CD8-positive, alpha-beta T cell (primary cell): ENCODE measurements at regions of chr6 and their contacts with region 1.

Region 1: GRCh38 chr6:30541515-30542403 is 14.5 kb downstream of the GNL1 start:
- DNase-seq: peak; percentile 59 to 92 (median 82)
- ATAC-seq: peak; percentile 69
- H3K4me3 ChIP-seq: peak overlapping the region; percentile 42 to 66
- H3K4me3 Mint-ChIP-seq: peak overlapping the region; percentile 88
- H3K27ac ChIP-seq: peak overlapping the region; percentile 50 to 72
- H3K27ac Mint-ChIP-seq: peak overlapping the region; percentile 97
- H3K4me1 ChIP-seq: peaks cover 34% of the 10 kb centered on the region
- H3K4me1 Mint-ChIP-seq: peaks cover 34% of the 10 kb centered on the region
- H3K27me3 ChIP-seq: no peaks in the 10 kb centered on the region
- H3K27me3 Mint-ChIP-seq: no peaks in the 10 kb centered on the region
- CTCF ChIP-seq: peak; percentile 99

Region 2: GRCh38 chr6:29092957-29093356 is 1448.8 kb before region 1 on chr6:
- CTCF ChIA-PET with region 1: no interaction called
- POLR2A ChIA-PET with region 1: no interaction called
- intact Hi-C with region 1: no loop called
- DNase-seq: no peak
- ATAC-seq: no peak
- H3K4me3 ChIP-seq: no peak overlapping the region
- H3K4me3 Mint-ChIP-seq: no peak overlapping the region
- H3K27ac ChIP-seq: no peak overlapping the region
- H3K27ac Mint-ChIP-seq: no peak overlapping the region
- H3K4me1 ChIP-seq: no peaks in the 10 kb centered on the region
- H3K4me1 Mint-ChIP-seq: no peaks in the 10 kb centered on the region
- H3K27me3 ChIP-seq: no peaks in the 10 kb centered on the region
- H3K27me3 Mint-ChIP-seq: peaks cover 25% of the 10 kb centered on the region
- CTCF ChIP-seq: no peak

Region 3: GRCh38 chr6:30344868-30345671 is 196.7 kb before region 1 on chr6 and contains the start of gene RPP21:
- CTCF ChIA-PET with region 1: no interaction called
- POLR2A ChIA-PET with region 1: no interaction called
- intact Hi-C with region 1: no loop called
- DNase-seq: peak; percentile 70 to 92 (median 85)
- ATAC-seq: peak; percentile 98
- H3K4me3 ChIP-seq: peak within 1 kb of the TSS; percentile 80 to 86
- H3K4me3 Mint-ChIP-seq: peak within 1 kb of the TSS; percentile 93
- H3K27ac ChIP-seq: peak within 1 kb of the TSS; percentile 85 to 86
- H3K27ac Mint-ChIP-seq: peak within 1 kb of the TSS; percentile 96
- H3K4me1 ChIP-seq: peaks cover 11% of the 10 kb centered on the region
- H3K4me1 Mint-ChIP-seq: peaks cover 23% of the 10 kb centered on the region
- H3K27me3 ChIP-seq: no peaks in the 10 kb centered on the region
- H3K27me3 Mint-ChIP-seq: no peaks in the 10 kb centered on the region
- CTCF ChIP-seq: no peak
- total RNA-seq, gene RPP21: 51.0 to 52.4 TPM

Region 4: GRCh38 chr6:30394139-30394538 is 147.6 kb before region 1 on chr6:
- CTCF ChIA-PET with region 1: no interaction called
- POLR2A ChIA-PET with region 1: no interaction called
- intact Hi-C with region 1: no loop called
- DNase-seq: no peak
- ATAC-seq: no peak
- H3K4me3 ChIP-seq: no peak overlapping the region
- H3K4me3 Mint-ChIP-seq: no peak overlapping the region
- H3K27ac ChIP-seq: no peak overlapping the region
- H3K27ac Mint-ChIP-seq: no peak overlapping the region
- H3K4me1 ChIP-seq: peaks cover 4% of the 10 kb centered on the region
- H3K4me1 Mint-ChIP-seq: peaks cover 4% of the 10 kb centered on the region
- H3K27me3 ChIP-seq: peaks cover 0 to 10% of the 10 kb centered on the region in 2 experiments
- H3K27me3 Mint-ChIP-seq: peaks cover 43% of the 10 kb centered on the region
- CTCF ChIP-seq: no peak

Region 5: DNA sequence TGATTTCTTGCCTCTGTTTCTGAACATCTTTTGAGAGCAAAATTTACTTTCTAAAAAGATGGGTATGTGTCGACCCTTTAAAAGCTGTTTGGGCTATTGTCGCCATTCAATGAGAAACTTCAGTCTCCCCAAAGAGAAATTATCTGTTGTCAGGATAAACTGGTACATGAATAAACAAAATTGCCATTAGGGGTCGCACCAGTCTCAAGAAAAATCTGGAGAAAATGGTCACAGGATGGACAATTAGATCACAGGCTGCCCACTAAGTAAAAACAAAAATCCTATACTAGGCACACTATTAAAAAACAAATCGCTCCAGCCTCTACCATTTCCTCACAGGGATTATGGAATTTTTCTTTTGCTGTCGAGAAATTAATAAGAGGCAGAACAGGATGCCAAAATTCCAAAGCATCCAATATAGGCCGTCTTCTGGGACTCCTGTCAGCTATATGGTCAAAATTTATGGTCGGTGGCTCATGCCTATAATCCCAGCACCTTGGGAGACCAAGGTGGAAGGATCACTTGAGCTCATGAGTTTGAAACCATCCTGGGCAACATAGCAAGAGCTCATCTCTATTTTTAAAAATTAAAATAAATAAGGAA is 58.0 kb before region 1 on chr6:
- CTCF ChIA-PET with region 1: interaction called, 437 read pairs
- POLR2A ChIA-PET with region 1: interaction called, 35 read pairs
- intact Hi-C with region 1: loop called (anchors 1 kb)
- DNase-seq: peak in 3 of 9 experiments; percentile 45 to 76 (median 68)
- ATAC-seq: no peak
- H3K4me3 ChIP-seq: no peak overlapping the region
- H3K4me3 Mint-ChIP-seq: no peak overlapping the region
- H3K27ac ChIP-seq: no peak overlapping the region
- H3K27ac Mint-ChIP-seq: no peak overlapping the region
- H3K4me1 ChIP-seq: peaks cover 21% of the 10 kb centered on the region
- H3K4me1 Mint-ChIP-seq: peaks cover 34% of the 10 kb centered on the region
- H3K27me3 ChIP-seq: peaks cover 10 to 19% of the 10 kb centered on the region in 2 experiments
- H3K27me3 Mint-ChIP-seq: peaks cover 27% of the 10 kb centered on the region
- CTCF ChIP-seq: peak; percentile 91

Region 6: GRCh38 chr6:30508890-30509736 is 32.6 kb before region 1 on chr6:
- CTCF ChIA-PET with region 1: interaction called, 73 read pairs
- POLR2A ChIA-PET with region 1: interaction called, 4 read pairs
- intact Hi-C with region 1: no loop called
- DNase-seq: peak in 3 of 9 experiments; percentile 43 to 88 (median 78)
- ATAC-seq: peak; percentile 81
- H3K4me3 ChIP-seq: peak overlapping the region; percentile 24 to 31
- H3K4me3 Mint-ChIP-seq: peak overlapping the region; percentile 62
- H3K27ac ChIP-seq: peak overlapping the region in 1 of 2 experiments; percentile 85
- H3K27ac Mint-ChIP-seq: peak overlapping the region; percentile 82
- H3K4me1 ChIP-seq: peaks cover 68% of the 10 kb centered on the region
- H3K4me1 Mint-ChIP-seq: peaks cover 62% of the 10 kb centered on the region
- H3K27me3 ChIP-seq: no peaks in the 10 kb centered on the region
- H3K27me3 Mint-ChIP-seq: no peaks in the 10 kb centered on the region
- CTCF ChIP-seq: no peak

Region 7: GRCh38 chr6:30565772-30566171 is 24.0 kb after region 1 on chr6:
- CTCF ChIA-PET with region 1: interaction called, 37 read pairs
- POLR2A ChIA-PET with region 1: interaction called, 4 read pairs
- intact Hi-C with region 1: no loop called
- DNase-seq: no peak
- ATAC-seq: no peak
- H3K4me3 ChIP-seq: no peak overlapping the region
- H3K4me3 Mint-ChIP-seq: no peak overlapping the region
- H3K27ac ChIP-seq: no peak overlapping the region
- H3K27ac Mint-ChIP-seq: no peak overlapping the region
- H3K4me1 ChIP-seq: peaks cover 14% of the 10 kb centered on the region
- H3K4me1 Mint-ChIP-seq: peaks cover 25% of the 10 kb centered on the region
- H3K27me3 ChIP-seq: no peaks in the 10 kb centered on the region
- H3K27me3 Mint-ChIP-seq: no peaks in the 10 kb centered on the region
- CTCF ChIP-seq: no peak

Region 8: DNA sequence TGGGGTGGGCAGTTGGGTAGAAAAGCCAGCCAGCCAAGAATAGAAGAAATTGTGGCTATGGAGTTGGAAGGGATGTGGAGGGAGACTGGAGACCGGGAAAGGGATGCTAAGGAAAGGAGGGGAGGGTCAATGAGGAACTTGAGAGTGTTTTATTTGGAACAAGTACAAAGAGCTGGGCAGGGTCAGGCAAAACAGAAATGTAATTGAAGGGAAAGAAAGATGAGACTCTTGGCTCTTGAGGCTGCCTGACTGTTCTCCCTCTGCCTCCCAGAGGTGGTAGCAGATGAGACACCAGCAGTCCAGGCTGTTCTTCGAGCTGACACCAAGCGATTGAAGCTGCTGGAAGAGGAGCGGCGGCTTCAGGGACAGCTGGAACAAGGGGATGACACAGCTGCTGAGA is 42.2 kb after region 1 on chr6:
- CTCF ChIA-PET with region 1: interaction called, 20 read pairs
- POLR2A ChIA-PET with region 1: no interaction called
- intact Hi-C with region 1: no loop called
- DNase-seq: no peak
- ATAC-seq: no peak
- H3K4me3 ChIP-seq: no peak overlapping the region
- H3K4me3 Mint-ChIP-seq: no peak overlapping the region
- H3K27ac ChIP-seq: no peak overlapping the region
- H3K27ac Mint-ChIP-seq: no peak overlapping the region
- H3K4me1 ChIP-seq: no peaks in the 10 kb centered on the region
- H3K4me1 Mint-ChIP-seq: no peaks in the 10 kb centered on the region
- H3K27me3 ChIP-seq: no peaks in the 10 kb centered on the region
- H3K27me3 Mint-ChIP-seq: no peaks in the 10 kb centered on the region
- CTCF ChIP-seq: no peak

Region 9: DNA sequence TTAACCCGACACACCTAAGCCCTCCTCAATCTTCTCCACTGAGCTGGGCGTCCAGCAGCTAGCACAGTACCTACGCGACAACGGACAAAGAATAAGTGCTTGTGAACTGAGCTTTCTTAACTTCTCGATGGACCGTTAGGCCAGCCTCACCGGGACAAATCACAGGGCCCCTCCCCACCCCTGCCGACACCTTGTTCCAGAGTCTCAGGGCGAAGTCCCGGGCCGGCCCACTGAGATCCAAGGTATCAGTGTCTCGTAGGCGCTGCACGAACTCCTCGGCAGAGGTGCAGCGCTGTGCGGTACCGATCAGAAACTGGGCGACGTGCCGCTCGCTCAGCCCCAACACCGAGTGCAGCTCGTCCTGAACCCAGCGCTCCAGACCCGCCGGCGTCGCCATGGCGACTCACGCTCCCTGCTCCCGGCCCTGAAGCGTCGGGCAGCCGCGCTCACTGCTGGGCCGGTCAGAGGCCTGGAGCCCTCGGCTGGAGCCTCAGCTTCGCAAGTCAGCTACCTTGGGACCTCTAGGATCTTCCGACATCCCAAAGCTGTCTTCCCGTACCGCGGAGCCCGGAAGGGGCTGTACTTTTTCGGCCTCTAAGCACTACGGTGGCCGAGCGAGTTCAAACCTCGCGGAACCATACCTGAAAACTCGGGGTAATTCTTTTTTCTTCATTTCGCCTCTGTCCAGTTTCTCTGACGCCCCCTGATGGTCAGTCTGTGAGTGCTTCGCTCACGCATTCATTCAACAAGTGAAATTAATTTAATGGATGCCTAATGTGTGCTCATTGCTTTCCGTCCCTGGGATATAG is 130.9 kb after region 1 on chr6 and contains the start of gene DHX16:
- CTCF ChIA-PET with region 1: interaction called, 12 read pairs
- POLR2A ChIA-PET with region 1: interaction called, 4 read pairs
- intact Hi-C with region 1: loop called in 1 of 2 experiments (anchors 1 kb)
- DNase-seq: peak; percentile 77 to 96 (median 90)
- ATAC-seq: peak; percentile 79
- H3K4me3 ChIP-seq: peak within 1 kb of the TSS; percentile 69 to 81
- H3K4me3 Mint-ChIP-seq: peak within 1 kb of the TSS; percentile 90
- H3K27ac ChIP-seq: peak within 1 kb of the TSS; percentile 51 to 71
- H3K27ac Mint-ChIP-seq: peak within 1 kb of the TSS; percentile 82
- H3K4me1 ChIP-seq: peaks cover 15% of the 10 kb centered on the region
- H3K4me1 Mint-ChIP-seq: peaks cover 38% of the 10 kb centered on the region
- H3K27me3 ChIP-seq: no peaks in the 10 kb centered on the region
- H3K27me3 Mint-ChIP-seq: no peaks in the 10 kb centered on the region
- CTCF ChIP-seq: peak; percentile 38
- total RNA-seq, gene DHX16: 15.8 to 17.9 TPM

Region 10: DNA sequence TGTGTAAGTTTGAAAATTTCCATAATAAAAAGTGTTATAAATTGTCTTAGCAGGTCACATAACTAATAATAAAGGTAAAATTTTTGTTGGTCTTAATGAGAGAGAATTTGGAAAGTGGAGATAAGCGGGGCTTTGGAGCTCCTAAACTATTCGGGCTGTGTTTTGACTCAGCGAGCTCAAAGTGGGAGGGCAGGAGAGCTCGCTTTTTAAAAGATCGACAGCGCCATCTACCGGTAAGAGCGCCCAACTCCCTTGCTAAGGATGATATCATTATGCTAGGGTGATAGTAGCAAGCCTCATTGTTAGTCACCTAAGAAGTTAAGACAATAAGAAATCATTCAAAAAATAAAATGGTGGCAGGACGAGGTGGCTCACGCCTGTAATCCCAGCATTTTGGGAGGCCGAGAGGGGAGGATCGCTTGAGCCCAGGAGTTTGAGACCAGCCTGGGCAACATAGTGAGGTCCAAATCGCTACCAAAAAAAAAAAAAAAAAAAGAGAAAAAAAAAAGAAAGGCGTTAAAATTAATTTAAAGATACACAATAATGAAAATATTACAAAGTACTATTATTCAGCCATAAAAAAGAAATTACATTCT is 545.8 kb after region 1 on chr6:
- CTCF ChIA-PET with region 1: interaction called, 5 read pairs
- POLR2A ChIA-PET with region 1: no interaction called
- intact Hi-C with region 1: loop called in 1 of 2 experiments (anchors 5 kb)
- DNase-seq: peak; percentile 80 to 93 (median 88)
- ATAC-seq: peak; percentile 98
- H3K4me3 ChIP-seq: no peak overlapping the region
- H3K4me3 Mint-ChIP-seq: no peak overlapping the region
- H3K27ac ChIP-seq: no peak overlapping the region
- H3K27ac Mint-ChIP-seq: no peak overlapping the region
- H3K4me1 ChIP-seq: no peaks in the 10 kb centered on the region
- H3K4me1 Mint-ChIP-seq: peaks cover 8% of the 10 kb centered on the region
- H3K27me3 ChIP-seq: no peaks in the 10 kb centered on the region
- H3K27me3 Mint-ChIP-seq: no peaks in the 10 kb centered on the region
- CTCF ChIP-seq: peak; percentile 63